Cardiac septum (tissue), 1 donor: ENCODE measurements at regions of chr2 and their contacts with region 1.

Region 1: DNA sequence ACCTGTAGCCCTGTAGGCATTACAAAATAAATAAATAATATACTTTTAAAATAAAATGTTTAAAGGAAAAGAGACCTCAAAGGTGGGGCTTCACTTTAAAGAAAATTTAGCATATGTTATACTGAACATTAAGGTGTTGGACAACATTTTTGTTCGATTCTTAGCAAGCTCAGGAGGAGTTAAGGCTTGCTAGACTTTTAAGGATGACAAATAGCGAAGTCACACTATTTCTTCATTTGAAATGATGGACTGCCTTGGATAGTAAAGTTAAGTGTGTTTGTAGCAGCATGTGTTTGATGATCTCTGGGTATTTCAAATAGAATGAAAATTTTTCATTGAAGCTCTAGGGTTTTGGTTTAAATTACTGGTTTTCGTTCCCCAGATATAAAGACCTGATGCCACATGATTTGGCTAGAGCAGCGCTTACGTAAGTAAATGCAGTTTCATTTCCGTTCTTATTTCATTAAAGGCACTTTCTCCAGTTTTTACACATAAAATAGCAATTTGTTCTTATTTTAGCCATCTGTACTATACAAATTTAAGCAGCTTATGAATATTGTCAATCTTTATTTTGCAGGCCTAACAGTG is 24.9 kb downstream of the HADHB start:
- DNase-seq: no peak

Region 2: DNA sequence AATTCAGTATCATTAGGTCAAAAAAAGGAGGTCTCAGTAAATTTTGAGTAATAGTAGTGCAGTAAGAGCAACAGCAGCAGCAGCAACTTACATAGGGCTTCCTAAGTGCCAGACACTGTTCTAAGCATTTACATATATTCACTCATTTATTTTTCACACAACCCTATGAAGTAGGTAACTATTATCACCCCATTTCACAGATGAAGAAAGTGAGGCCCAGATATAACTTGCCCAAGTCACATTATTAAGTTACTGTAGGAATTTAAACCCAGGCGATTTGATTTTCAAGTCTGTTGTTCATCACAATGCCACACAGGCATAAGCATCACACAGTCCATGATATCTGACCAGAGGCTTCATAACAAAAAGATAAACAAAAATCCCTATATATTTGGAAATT is 506.1 kb before region 1 on chr2:
- intact Hi-C with region 1: no loop called
- DNase-seq: no peak

Region 3: DNA sequence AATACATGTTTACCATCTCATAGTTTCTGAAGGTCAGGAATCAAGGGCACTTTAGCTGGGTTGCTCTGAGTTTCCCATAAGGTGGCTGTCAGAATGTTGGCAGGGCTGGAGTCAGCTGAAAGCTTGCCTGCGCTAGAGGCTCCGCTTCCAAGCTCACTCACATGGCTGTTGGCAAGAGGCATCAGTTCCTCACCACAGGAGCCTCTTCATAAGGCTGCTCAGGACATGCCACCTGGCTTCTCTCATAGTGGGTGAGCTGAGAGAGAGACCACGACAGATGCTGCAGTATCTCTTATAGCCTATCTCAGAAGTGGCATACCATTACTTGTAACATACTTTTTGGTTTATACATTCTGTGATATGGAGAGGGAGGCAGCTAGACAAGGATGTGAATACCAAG is 17.8 kb before region 1 on chr2:
- intact Hi-C with region 1: loop called (anchors 2 kb)
- DNase-seq: peak; percentile 86

Region 4: DNA sequence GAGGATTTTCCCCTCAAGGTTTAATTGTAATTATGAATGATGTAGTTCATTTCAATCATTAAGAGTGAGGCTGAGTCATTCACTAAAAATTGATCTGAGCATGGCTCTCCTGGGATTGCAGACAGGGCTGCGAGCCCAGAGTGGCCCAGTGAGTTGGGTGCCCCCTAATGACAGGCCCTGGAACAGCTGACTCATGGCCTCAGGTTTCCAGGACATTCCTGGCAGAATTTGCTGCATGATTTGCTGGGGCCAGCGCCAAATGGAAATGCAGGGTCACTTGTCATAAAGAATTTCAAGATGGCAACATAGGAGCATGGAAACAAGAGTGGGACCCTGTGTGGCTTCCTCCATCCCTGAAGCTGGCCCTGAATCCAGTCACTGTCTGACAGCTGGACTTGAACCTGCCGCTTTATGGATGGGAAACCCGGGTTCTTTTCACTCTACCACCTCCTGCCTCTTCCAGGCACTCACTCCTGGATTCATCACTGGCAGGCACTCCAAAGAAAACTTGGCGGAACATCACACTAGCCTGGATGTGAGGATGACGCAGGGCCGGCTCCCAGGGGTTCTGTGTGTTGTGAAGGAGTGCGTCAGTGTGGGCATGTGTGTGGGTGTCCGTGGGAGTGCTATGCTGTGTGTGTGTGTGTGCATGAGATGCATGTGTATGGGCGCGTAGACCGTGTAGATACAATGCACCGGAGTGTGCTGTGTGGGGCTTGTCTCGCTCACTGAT is 193.0 kb after region 1 on chr2:
- intact Hi-C with region 1: no loop called
- DNase-seq: no peak